ENCODE measurements at regions of chr5 and their contacts with region 1.

Region 1: DNA sequence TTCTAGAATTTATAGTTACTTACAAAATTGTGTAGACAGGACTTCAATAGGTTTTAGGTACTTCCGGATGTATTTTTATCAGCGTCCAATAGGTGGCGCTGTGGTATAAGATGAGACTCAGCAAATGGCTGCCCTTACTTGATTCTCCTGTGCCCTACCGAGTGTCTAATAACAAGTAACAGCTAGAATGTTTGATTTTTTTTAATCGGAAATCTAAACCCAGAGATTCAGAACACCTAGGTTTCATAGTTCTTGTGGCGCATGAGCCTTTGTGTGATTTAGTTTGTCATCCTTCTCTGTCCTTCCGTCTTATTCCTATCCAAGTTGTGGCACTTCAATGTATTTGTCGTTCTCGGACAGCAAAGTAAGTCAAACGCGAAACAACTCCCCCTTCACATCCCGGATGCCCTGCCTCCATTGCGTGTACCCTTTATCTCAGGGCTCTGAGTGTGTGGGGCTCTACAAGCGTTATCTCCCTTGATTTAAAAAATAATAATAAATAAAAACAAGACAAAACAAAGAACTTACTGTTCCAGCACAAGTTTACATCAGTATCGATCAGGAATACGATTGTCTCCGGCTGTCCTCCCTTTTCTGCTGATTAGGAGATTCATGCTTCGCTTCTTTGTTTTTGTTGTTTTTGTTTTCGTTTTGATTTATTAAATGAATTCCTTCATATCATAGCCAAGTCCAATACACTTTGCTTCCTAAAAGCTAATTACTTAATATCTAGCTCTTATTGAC is 50.7 kb upstream of the SLC30A5 start:
- DNase-seq: no peak
- ATAC-seq: peak; percentile 99

Region 2: GRCh38 chr5:69224520-69224919 is 181.4 kb after region 1 on chr5:
- intact Hi-C with region 1: loop called (anchors 5 kb)
- DNase-seq: no peak
- ATAC-seq: no peak

Region 3: GRCh38 chr5:69334793-69335268 is 291.7 kb after region 1 on chr5:
- intact Hi-C with region 1: loop called (anchors 5 kb)
- DNase-seq: peak; percentile 92
- ATAC-seq: peak; percentile 94